Esophagus muscularis mucosa (tissue), 4 donors: ENCODE measurements at regions of chr15 and their contacts with region 1.

Region 1: DNA sequence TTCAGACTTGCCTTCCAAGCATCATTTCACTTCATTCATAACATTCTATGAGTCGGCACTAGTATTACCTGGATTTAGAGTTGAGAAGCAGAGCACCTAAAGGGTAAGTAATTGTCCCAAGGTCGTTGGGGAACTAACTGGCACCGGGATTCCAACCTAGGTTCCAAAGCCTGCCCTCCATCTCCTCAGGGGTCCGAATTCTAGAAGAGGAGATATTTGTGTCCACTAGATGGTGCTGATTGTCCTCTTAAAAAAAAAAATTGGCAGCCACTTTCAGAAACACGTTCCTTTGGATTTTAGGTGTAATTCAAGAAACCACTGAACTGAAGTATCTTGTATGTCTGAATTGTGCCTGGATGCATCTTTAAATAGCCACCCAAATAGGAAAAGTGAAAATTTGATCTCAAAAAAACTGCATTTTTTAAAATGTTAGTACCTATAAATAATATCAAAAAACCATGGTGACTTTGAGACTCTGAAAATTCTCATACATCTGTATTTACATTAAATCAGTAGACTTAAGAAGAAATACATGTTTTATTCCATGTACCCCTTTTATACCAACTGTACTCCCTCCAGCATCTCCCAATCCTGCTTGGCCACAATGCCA is 3.9 kb upstream of the FSIP1 start:
- DNase-seq: no peak
- H3K4me3 ChIP-seq: no peak overlapping the region
- H3K27ac ChIP-seq: peak overlapping the region in 2 of 4 donors; percentile 8 to 40
- H3K4me1 ChIP-seq: peaks cover 13 to 77% (median 72%) of the 10 kb centered on the region in 4 donors
- H3K27me3 ChIP-seq: no peaks in the 10 kb centered on the region
- CTCF ChIP-seq: peak; percentile 64 to 71 (median 66)
- EP300 ChIP-seq: no peak
- POLR2A ChIP-seq: no peak

Region 2: GRCh38 chr15:39869858-39870515 is 83.4 kb after region 1 on chr15:
- intact Hi-C with region 1: loop called (anchors 2 kb)
- DNase-seq: no peak
- H3K4me3 ChIP-seq: no peak overlapping the region
- H3K27ac ChIP-seq: no peak overlapping the region
- H3K4me1 ChIP-seq: peaks cover 0 to 5% (median 0%) of the 10 kb centered on the region in 4 donors
- H3K27me3 ChIP-seq: no peaks in the 10 kb centered on the region
- CTCF ChIP-seq: no peak
- EP300 ChIP-seq: no peak
- POLR2A ChIP-seq: no peak

Region 3: DNA sequence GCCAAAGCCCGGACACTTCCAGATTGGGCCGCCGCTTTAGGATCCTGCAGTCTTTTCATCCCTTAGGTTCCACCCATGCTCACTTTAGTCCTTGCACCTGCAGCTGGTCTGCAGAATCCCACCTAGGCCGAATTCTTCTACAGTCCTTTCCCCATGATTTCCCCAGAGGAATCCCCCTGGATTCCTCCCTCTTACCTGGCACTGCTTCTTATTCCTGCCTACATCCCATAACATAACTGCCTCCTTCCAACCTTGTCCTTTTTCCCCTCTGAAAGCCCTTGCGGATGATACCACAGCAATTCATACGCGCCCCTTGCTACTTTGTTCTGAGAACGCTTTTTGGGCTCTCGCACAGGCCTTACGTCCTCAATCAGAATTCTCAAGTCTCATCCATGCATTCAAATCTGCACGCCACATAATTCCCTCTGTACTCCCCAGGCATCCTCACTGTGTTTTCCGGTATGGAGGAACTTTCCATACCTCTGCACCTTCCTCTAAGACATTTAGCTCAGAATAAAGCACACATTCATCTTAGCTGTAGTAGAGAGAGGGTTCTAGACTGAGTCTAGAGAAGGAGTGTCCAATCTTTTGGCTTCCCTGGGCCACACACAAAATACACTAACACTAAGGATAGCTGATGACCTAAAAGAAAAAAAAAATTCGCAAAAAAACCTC is 148.0 kb after region 1 on chr15:
- intact Hi-C with region 1: loop called (anchors 5 kb)
- DNase-seq: no peak
- H3K4me3 ChIP-seq: peak overlapping the region; percentile 73 to 78 (median 77)
- H3K27ac ChIP-seq: peak overlapping the region; percentile 83 to 87 (median 86)
- H3K4me1 ChIP-seq: peaks cover 15 to 53% (median 51%) of the 10 kb centered on the region in 4 donors
- H3K27me3 ChIP-seq: no peaks in the 10 kb centered on the region
- CTCF ChIP-seq: no peak
- EP300 ChIP-seq: no peak
- POLR2A ChIP-seq: no peak

Region 4: DNA sequence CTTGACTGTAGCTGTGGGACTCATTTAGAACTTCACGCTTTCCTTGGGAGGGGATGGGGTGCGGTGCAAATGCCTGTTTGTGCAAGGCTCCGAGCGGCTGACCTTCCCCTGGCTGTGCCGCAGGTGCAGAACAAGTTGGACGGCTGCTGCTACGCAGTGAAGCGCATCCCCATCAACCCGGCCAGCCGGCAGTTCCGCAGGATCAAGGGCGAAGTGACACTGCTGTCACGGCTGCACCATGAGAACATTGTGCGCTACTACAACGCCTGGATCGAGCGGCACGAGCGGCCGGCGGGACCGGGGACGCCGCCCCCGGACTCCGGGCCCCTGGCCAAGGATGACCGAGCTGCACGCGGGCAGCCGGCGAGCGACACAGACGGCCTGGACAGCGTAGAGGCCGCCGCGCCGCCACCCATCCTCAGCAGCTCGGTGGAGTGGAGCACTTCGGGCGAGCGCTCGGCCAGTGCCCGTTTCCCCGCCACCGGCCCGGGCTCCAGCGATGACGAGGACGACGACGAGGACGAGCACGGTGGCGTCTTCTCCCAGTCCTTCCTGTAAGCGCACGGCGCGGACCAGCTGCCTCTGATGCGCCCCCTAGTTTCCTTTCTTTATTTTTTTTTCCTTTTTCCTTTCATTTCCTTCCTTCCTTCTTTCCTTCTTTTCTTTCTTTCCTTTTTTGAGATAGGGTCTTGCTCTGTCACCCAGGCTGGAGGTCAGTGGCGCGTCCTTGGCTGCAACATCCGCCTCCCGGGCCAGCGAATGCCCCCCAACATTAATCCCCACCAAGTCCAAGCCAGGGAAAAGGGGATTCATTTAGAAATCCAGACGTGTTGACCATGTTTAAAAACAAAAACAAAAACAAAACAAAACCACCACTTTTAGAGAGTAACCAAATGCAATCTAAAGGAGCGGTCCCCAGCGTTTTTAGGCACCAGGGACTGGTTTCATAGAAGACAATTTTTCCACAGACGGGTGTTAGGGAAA is 190.0 kb after region 1 on chr15:
- intact Hi-C with region 1: loop called (anchors 2 kb)
- DNase-seq: no peak
- H3K4me3 ChIP-seq: peak overlapping the region; percentile 61 to 70 (median 65)
- H3K27ac ChIP-seq: peak overlapping the region; percentile 73 to 84 (median 80)
- H3K4me1 ChIP-seq: peaks cover 4 to 13% (median 9%) of the 10 kb centered on the region in 4 donors
- H3K27me3 ChIP-seq: no peaks in the 10 kb centered on the region
- CTCF ChIP-seq: peak; percentile 49 to 72 (median 54)
- EP300 ChIP-seq: no peak
- POLR2A ChIP-seq: no peak